Naive thymus-derived CD4-positive, alpha-beta T cell (primary cell): ENCODE measurements at regions of chr4 and their contacts with region 1.

Region 1: GRCh38 chr4:41990365-41991111 is at the start of gene SLC30A9:
- DNase-seq: peak; percentile 83 to 96 (median 93)
- ATAC-seq: peak; percentile 98
- H3K4me3 ChIP-seq: peak within 1 kb of the TSS; percentile 86
- H3K4me3 Mint-ChIP-seq: peak within 1 kb of the TSS; percentile 92 to 99 (median 96)
- H3K27ac ChIP-seq: peak within 1 kb of the TSS; percentile 84
- H3K27ac Mint-ChIP-seq: peak within 1 kb of the TSS; percentile 90 to 99 (median 97)
- H3K4me1 ChIP-seq: peaks cover 12 to 16% of the 10 kb centered on the region in 2 donors
- H3K4me1 Mint-ChIP-seq: peaks cover 17 to 48% (median 43%) of the 10 kb centered on the region in 7 donors
- H3K27me3 ChIP-seq: no peaks in the 10 kb centered on the region
- H3K27me3 Mint-ChIP-seq: no peaks in the 10 kb centered on the region
- total RNA-seq, gene SLC30A9: 21.4 to 34.4 (median 32.7) TPM

Region 2: GRCh38 chr4:41934815-41935651 is 55.5 kb before region 1 on chr4 and contains the start of gene TMEM33:
- CTCF ChIA-PET with region 1: interaction called, 3 read pairs
- POLR2A ChIA-PET with region 1: interaction called, 11 read pairs
- intact Hi-C with region 1: loop called (anchors 1 kb)
- DNase-seq: peak; percentile 48 to 81 (median 75)
- ATAC-seq: peak; percentile 89
- H3K4me3 ChIP-seq: peak within 1 kb of the TSS; percentile 84
- H3K4me3 Mint-ChIP-seq: peak within 1 kb of the TSS; percentile 93 to 99 (median 96)
- H3K27ac ChIP-seq: peak within 1 kb of the TSS; percentile 80
- H3K27ac Mint-ChIP-seq: peak within 1 kb of the TSS; percentile 71 to 97 (median 89)
- H3K4me1 ChIP-seq: peaks cover 15 to 20% of the 10 kb centered on the region in 2 donors
- H3K4me1 Mint-ChIP-seq: peaks cover 39 to 59% (median 51%) of the 10 kb centered on the region in 7 donors
- H3K27me3 ChIP-seq: no peaks in the 10 kb centered on the region
- H3K27me3 Mint-ChIP-seq: no peaks in the 10 kb centered on the region
- total RNA-seq, gene TMEM33: 24.2 to 61.9 (median 39.6) TPM

Region 3: GRCh38 chr4:41963105-41963504 is 27.4 kb before region 1 on chr4:
- CTCF ChIA-PET with region 1: no interaction called
- POLR2A ChIA-PET with region 1: no interaction called
- intact Hi-C with region 1: no loop called
- DNase-seq: peak in 3 of 9 donors; percentile 5 to 13 (median 7)
- ATAC-seq: no peak
- H3K4me3 ChIP-seq: no peak overlapping the region
- H3K4me3 Mint-ChIP-seq: no peak overlapping the region
- H3K27ac ChIP-seq: no peak overlapping the region
- H3K27ac Mint-ChIP-seq: no peak overlapping the region
- H3K4me1 ChIP-seq: no peaks in the 10 kb centered on the region
- H3K4me1 Mint-ChIP-seq: no peaks in the 10 kb centered on the region
- H3K27me3 ChIP-seq: no peaks in the 10 kb centered on the region
- H3K27me3 Mint-ChIP-seq: no peaks in the 10 kb centered on the region

Region 4: GRCh38 chr4:42008011-42008786 is 17.7 kb after region 1 on chr4:
- CTCF ChIA-PET with region 1: no interaction called
- POLR2A ChIA-PET with region 1: no interaction called
- intact Hi-C with region 1: loop called in 1 of 2 experiments (anchors 2 kb)
- DNase-seq: no peak
- ATAC-seq: no peak
- H3K4me3 ChIP-seq: no peak overlapping the region
- H3K4me3 Mint-ChIP-seq: peak overlapping the region in 1 of 10 donors; percentile 1
- H3K27ac ChIP-seq: no peak overlapping the region
- H3K27ac Mint-ChIP-seq: peak overlapping the region in 3 of 9 donors; percentile 40 to 51 (median 49)
- H3K4me1 ChIP-seq: no peaks in the 10 kb centered on the region
- H3K4me1 Mint-ChIP-seq: peaks cover 3 to 75% (median 68%) of the 10 kb centered on the region in 7 donors
- H3K27me3 ChIP-seq: no peaks in the 10 kb centered on the region
- H3K27me3 Mint-ChIP-seq: no peaks in the 10 kb centered on the region

Region 5: DNA sequence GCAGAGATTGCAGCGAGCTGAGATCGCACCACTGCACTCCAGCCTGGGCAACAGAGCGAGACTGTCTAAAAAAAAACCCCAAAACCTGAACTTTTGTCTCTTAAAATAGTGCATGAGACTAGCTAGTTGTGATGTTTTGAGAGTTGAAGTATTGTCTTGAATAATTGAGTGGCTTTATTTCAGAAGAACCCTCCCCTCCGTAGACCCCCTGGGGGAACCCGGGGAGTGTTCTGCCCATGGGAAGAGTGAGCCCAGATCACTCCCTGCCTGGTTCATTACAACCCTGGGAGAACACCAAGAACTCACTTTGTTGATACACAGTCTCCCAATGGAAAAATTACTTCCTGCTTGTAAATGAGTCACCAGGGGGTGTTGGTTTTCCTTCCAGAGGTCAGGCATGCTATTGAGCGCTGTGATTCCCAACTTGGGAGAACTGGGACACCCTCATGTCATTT is 341.4 kb after region 1 on chr4:
- CTCF ChIA-PET with region 1: no interaction called
- POLR2A ChIA-PET with region 1: no interaction called
- intact Hi-C with region 1: no loop called
- DNase-seq: no peak
- ATAC-seq: no peak
- H3K4me3 ChIP-seq: no peak overlapping the region
- H3K4me3 Mint-ChIP-seq: no peak overlapping the region
- H3K27ac ChIP-seq: no peak overlapping the region
- H3K27ac Mint-ChIP-seq: no peak overlapping the region
- H3K4me1 ChIP-seq: no peaks in the 10 kb centered on the region
- H3K4me1 Mint-ChIP-seq: no peaks in the 10 kb centered on the region
- H3K27me3 ChIP-seq: no peaks in the 10 kb centered on the region
- H3K27me3 Mint-ChIP-seq: peaks cover 0 to 12% (median 0%) of the 10 kb centered on the region in 5 donors

Region 6: GRCh38 chr4:42673082-42673425 is 682.5 kb after region 1 on chr4:
- CTCF ChIA-PET with region 1: no interaction called
- POLR2A ChIA-PET with region 1: no interaction called
- intact Hi-C with region 1: loop called in 1 of 2 experiments (anchors 5 kb)
- DNase-seq: peak in 2 of 9 donors; percentile 8 to 17
- ATAC-seq: no peak
- H3K4me3 ChIP-seq: no peak overlapping the region
- H3K4me3 Mint-ChIP-seq: peak overlapping the region in 9 of 10 donors; percentile 5 to 76 (median 58)
- H3K27ac ChIP-seq: no peak overlapping the region
- H3K27ac Mint-ChIP-seq: peak overlapping the region; percentile 56 to 97 (median 78)
- H3K4me1 ChIP-seq: peaks cover 23 to 28% of the 10 kb centered on the region in 2 donors
- H3K4me1 Mint-ChIP-seq: peaks cover 25 to 60% (median 41%) of the 10 kb centered on the region in 7 donors
- H3K27me3 ChIP-seq: no peaks in the 10 kb centered on the region
- H3K27me3 Mint-ChIP-seq: no peaks in the 10 kb centered on the region